ENCODE measurements at regions of chr11 and their contacts with region 1.

Region 1: GRCh38 chr11:15976433-15977045 is 379.8 kb downstream of the SOX6 start:
- DNase-seq: no peak
- H3K4me3 ChIP-seq: no peak overlapping the region
- CTCF ChIP-seq: no peak

Region 2: DNA sequence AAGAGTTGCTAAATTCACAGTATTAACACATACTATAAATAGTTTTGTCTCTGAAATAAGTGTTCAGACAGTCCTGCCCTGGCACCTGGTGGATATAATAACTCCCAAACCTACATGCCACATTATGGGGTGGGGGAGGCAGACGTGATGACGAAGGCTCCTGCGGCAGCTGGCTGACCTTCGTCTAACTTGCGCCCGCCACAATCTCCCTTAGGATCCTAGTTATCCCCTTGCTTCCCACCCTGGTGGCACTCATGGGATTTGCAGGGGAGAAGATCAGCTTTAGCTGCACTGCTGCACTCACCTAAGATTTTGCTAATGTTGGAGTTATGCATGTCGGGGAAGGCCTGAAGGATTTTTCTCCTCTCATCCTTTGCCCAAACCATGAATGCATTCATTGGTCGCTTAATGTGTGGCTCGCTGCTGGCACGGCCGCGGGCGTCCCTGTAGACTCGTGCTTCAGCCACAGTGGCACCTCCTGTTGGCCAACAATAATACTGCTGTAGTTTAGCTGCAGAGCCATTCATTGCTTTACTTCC is 12.2 kb after region 1 on chr11:
- CTCF ChIA-PET with region 1: interaction called, 11 read pairs
- POLR2A ChIA-PET with region 1: no interaction called
- DNase-seq: no peak
- H3K4me3 ChIP-seq: no peak overlapping the region
- CTCF ChIP-seq: no peak